CD8-positive, alpha-beta memory T cell (primary cell): ENCODE measurements at regions of chr1 and their contacts with region 1.

Region 1: DNA sequence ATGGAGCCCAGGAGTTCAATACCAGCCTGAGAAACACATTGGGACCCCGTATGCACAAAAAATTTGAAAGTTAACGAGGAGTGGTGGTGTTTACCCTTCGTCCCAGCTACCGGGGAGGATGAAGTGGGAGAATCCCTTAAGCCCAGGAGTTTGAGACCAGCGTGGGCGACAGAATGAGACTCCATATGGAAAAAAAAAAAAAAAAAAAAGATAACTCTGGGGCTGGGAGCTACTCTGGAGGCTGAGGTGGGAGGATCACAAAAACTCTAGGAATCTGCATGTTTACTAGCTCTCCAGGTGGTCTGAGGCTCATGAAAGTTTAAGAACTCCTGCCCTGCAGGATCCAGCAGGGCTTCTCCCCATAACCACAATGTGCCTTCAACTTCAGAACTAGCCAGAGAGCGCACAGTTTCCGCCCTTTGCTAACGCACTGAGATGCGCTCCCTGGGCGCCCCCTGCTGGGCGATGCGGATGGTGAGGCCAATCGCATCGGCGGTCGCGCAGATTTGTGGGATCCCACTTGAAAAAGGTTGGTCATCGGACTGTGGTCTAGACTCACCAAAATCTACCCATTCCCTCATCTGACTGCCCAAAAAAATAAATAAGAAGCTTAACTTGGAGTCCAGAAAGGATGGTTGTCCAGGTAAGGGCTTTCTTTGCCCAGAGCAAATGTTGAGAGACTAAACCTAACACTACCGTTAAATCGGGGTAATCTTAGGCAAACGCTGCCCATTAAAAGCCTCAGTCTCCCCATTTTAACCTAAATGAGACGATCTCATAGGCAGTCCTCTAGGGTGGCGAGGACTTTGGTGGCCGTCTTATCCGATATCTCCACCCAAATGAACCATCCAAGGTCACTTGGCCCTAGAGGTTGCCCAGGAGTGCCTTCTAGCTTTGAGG is 8.8 kb downstream of the ZNF683 start:
- DNase-seq: peak; percentile 75 to 87 (median 78)
- H3K4me3 ChIP-seq: no peak overlapping the region
- H3K4me3 Mint-ChIP-seq: peak overlapping the region in 5 of 7 donors; percentile 4 to 72 (median 61)
- H3K27ac ChIP-seq: no peak overlapping the region
- H3K27ac Mint-ChIP-seq: peak overlapping the region in 5 of 8 donors; percentile 18 to 59 (median 32)
- H3K4me1 ChIP-seq: peaks cover 46% of the 10 kb centered on the region
- H3K4me1 Mint-ChIP-seq: peaks cover 60 to 84% (median 66%) of the 10 kb centered on the region in 3 donors
- H3K27me3 ChIP-seq: peaks cover 14% of the 10 kb centered on the region
- H3K27me3 Mint-ChIP-seq: peaks cover 11 to 25% of the 10 kb centered on the region in 2 donors

Region 2: DNA sequence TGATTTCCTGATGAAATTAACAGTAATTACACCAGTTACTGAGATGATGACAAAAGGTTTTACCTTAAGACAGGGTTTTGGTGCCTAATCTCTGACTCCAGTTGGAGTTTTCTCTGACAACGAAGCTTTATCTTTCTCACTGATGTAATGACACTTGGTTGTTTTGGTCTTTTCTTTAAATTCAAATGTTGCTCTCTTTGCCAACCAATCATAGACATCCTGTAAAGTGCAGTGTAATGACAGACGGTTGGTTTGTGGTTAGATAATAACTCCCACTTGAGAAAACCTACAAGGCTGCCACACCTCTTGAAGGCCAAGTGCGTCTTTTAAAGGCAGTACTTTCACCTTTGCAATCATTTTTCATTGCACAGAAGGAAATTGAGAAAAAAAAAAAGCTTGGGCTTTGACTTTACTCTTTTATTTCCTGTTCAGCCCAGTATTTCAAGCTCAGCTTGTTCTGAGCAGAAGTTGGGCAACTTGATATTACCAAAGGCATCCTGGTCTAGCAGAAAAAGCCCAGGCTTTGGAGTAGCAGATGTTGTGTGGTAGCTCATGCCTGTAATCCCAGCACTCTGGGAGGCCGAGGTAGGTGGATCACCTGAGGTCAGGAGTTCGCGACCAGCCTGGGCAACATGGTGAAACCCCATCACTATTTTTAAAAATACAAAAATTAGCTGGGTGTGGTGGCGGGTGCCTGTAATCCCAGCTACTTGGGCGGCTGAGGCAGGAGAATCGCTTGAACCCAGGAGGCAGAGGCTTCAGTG is 237.3 kb before region 1 on chr1:
- CTCF ChIA-PET with region 1: no interaction called
- POLR2A ChIA-PET with region 1: no interaction called
- DNase-seq: peak in 4 of 5 donors; percentile 46 to 90 (median 84)
- H3K4me3 ChIP-seq: peak overlapping the region; percentile 38
- H3K4me3 Mint-ChIP-seq: peak overlapping the region; percentile 22 to 82 (median 71)
- H3K27ac ChIP-seq: peak overlapping the region; percentile 79
- H3K27ac Mint-ChIP-seq: peak overlapping the region; percentile 58 to 93 (median 89)
- H3K4me1 ChIP-seq: peaks cover 29% of the 10 kb centered on the region
- H3K4me1 Mint-ChIP-seq: peaks cover 32 to 53% (median 48%) of the 10 kb centered on the region in 3 donors
- H3K27me3 ChIP-seq: no peaks in the 10 kb centered on the region
- H3K27me3 Mint-ChIP-seq: peaks cover 0 to 16% of the 10 kb centered on the region in 2 donors

Region 3: GRCh38 chr1:26328597-26328996 is 35.2 kb before region 1 on chr1:
- CTCF ChIA-PET with region 1: interaction called, 18 read pairs
- POLR2A ChIA-PET with region 1: interaction called, 11 read pairs
- DNase-seq: no peak
- H3K4me3 ChIP-seq: no peak overlapping the region
- H3K4me3 Mint-ChIP-seq: no peak overlapping the region
- H3K27ac ChIP-seq: no peak overlapping the region
- H3K27ac Mint-ChIP-seq: no peak overlapping the region
- H3K4me1 ChIP-seq: no peaks in the 10 kb centered on the region
- H3K4me1 Mint-ChIP-seq: peaks cover 0 to 6% (median 5%) of the 10 kb centered on the region in 3 donors
- H3K27me3 ChIP-seq: no peaks in the 10 kb centered on the region
- H3K27me3 Mint-ChIP-seq: no peaks in the 10 kb centered on the region

Region 4: GRCh38 chr1:26378088-26378878 is 14.5 kb after region 1 on chr1:
- CTCF ChIA-PET with region 1: interaction called, 144 read pairs
- POLR2A ChIA-PET with region 1: interaction called, 13 read pairs
- DNase-seq: peak; percentile 79 to 95 (median 81)
- H3K4me3 ChIP-seq: peak overlapping the region; percentile 47
- H3K4me3 Mint-ChIP-seq: peak overlapping the region; percentile 46 to 85 (median 75)
- H3K27ac ChIP-seq: peak overlapping the region; percentile 75
- H3K27ac Mint-ChIP-seq: peak overlapping the region; percentile 80 to 97 (median 94)
- H3K4me1 ChIP-seq: peaks cover 70% of the 10 kb centered on the region
- H3K4me1 Mint-ChIP-seq: peaks cover 67 to 79% (median 71%) of the 10 kb centered on the region in 3 donors
- H3K27me3 ChIP-seq: no peaks in the 10 kb centered on the region
- H3K27me3 Mint-ChIP-seq: peaks cover 0 to 3% of the 10 kb centered on the region in 2 donors

Region 5: GRCh38 chr1:26542771-26543451 is 179.1 kb after region 1 on chr1:
- CTCF ChIA-PET with region 1: no interaction called
- POLR2A ChIA-PET with region 1: no interaction called
- DNase-seq: no peak
- H3K4me3 ChIP-seq: peak overlapping the region; percentile 60
- H3K4me3 Mint-ChIP-seq: peak overlapping the region; percentile 48 to 84 (median 79)
- H3K27ac ChIP-seq: peak overlapping the region; percentile 80
- H3K27ac Mint-ChIP-seq: peak overlapping the region; percentile 94 to 98 (median 97)
- H3K4me1 ChIP-seq: peaks cover 92% of the 10 kb centered on the region
- H3K4me1 Mint-ChIP-seq: peaks cover 85 to 94% (median 91%) of the 10 kb centered on the region in 3 donors
- H3K27me3 ChIP-seq: no peaks in the 10 kb centered on the region
- H3K27me3 Mint-ChIP-seq: peaks cover 0 to 1% of the 10 kb centered on the region in 2 donors